ENCODE measurements at regions of chr1 and their contacts with region 1.

Region 1: GRCh38 chr1:46603858-46604549 is at the start of gene MKNK1:
- DNase-seq: peak; percentile 94 to 99 (median 99)
- ATAC-seq: peak; percentile 98
- H3K4me3 ChIP-seq: peak within 1 kb of the TSS; percentile 91 to 98
- H3K4me3 Mint-ChIP-seq: peak within 1 kb of the TSS; percentile 92
- H3K27ac ChIP-seq: peak within 1 kb of the TSS; percentile 73 to 79
- H3K27ac Mint-ChIP-seq: peak within 1 kb of the TSS; percentile 92
- H3K4me1 ChIP-seq: peaks cover 43% of the 10 kb centered on the region
- H3K4me1 Mint-ChIP-seq: peaks cover 65% of the 10 kb centered on the region
- H3K27me3 ChIP-seq: no peaks in the 10 kb centered on the region
- H3K27me3 Mint-ChIP-seq: no peaks in the 10 kb centered on the region
- CTCF ChIP-seq: no peak
- total RNA-seq, gene MKNK1: 30.3 to 30.6 TPM

Region 2: GRCh38 chr1:46197964-46198811 is 405.8 kb before region 1 on chr1 and contains the start of gene POMGNT1:
- CTCF ChIA-PET with region 1: no interaction called
- POLR2A ChIA-PET with region 1: no interaction called
- intact Hi-C with region 1: loop called in 1 of 2 experiments (anchors 5 kb)
- DNase-seq: peak; percentile 50 to 86 (median 72)
- ATAC-seq: peak; percentile 93
- H3K4me3 ChIP-seq: peak within 1 kb of the TSS; percentile 75 to 93
- H3K4me3 Mint-ChIP-seq: peak within 1 kb of the TSS; percentile 83
- H3K27ac ChIP-seq: peak within 1 kb of the TSS; percentile 58 to 59
- H3K27ac Mint-ChIP-seq: peak within 1 kb of the TSS; percentile 88
- H3K4me1 ChIP-seq: peaks cover 20% of the 10 kb centered on the region
- H3K4me1 Mint-ChIP-seq: peaks cover 32% of the 10 kb centered on the region
- H3K27me3 ChIP-seq: peaks cover 0 to 3% of the 10 kb centered on the region in 2 experiments
- H3K27me3 Mint-ChIP-seq: no peaks in the 10 kb centered on the region
- CTCF ChIP-seq: no peak
- total RNA-seq, gene POMGNT1: 20.3 to 23.4 TPM

Region 3: GRCh38 chr1:46539972-46540371 is 64.0 kb before region 1 on chr1:
- CTCF ChIA-PET with region 1: no interaction called
- POLR2A ChIA-PET with region 1: no interaction called
- intact Hi-C with region 1: no loop called
- DNase-seq: no peak
- ATAC-seq: no peak
- H3K4me3 ChIP-seq: no peak overlapping the region
- H3K4me3 Mint-ChIP-seq: no peak overlapping the region
- H3K27ac ChIP-seq: no peak overlapping the region
- H3K27ac Mint-ChIP-seq: no peak overlapping the region
- H3K4me1 ChIP-seq: no peaks in the 10 kb centered on the region
- H3K4me1 Mint-ChIP-seq: peaks cover 3% of the 10 kb centered on the region
- H3K27me3 ChIP-seq: peaks cover 6 to 8% of the 10 kb centered on the region in 2 experiments
- H3K27me3 Mint-ChIP-seq: peaks cover 35% of the 10 kb centered on the region
- CTCF ChIP-seq: no peak

Region 4: GRCh38 chr1:46616277-46617107 is 12.5 kb after region 1 on chr1 and contains the start of gene MOB3C:
- CTCF ChIA-PET with region 1: interaction called, 22 read pairs
- POLR2A ChIA-PET with region 1: interaction called, 102 read pairs
- intact Hi-C with region 1: loop called (anchors 1 kb)
- DNase-seq: peak in 8 of 9 experiments; percentile 49 to 82 (median 73)
- ATAC-seq: peak; percentile 83
- H3K4me3 ChIP-seq: peak within 1 kb of the TSS; percentile 91 to 96
- H3K4me3 Mint-ChIP-seq: peak within 1 kb of the TSS; percentile 90
- H3K27ac ChIP-seq: peak within 1 kb of the TSS; percentile 88 to 89
- H3K27ac Mint-ChIP-seq: peak within 1 kb of the TSS; percentile 92
- H3K4me1 ChIP-seq: peaks cover 47% of the 10 kb centered on the region
- H3K4me1 Mint-ChIP-seq: peaks cover 51% of the 10 kb centered on the region
- H3K27me3 ChIP-seq: no peaks in the 10 kb centered on the region
- H3K27me3 Mint-ChIP-seq: no peaks in the 10 kb centered on the region
- CTCF ChIP-seq: no peak
- total RNA-seq, gene MOB3C: 8.0 to 8.6 TPM

Region 5: GRCh38 chr1:46667782-46668760 is 64.1 kb after region 1 on chr1 and contains the start of gene ATPAF1:
- CTCF ChIA-PET with region 1: interaction called, 3 read pairs
- POLR2A ChIA-PET with region 1: interaction called, 12 read pairs
- intact Hi-C with region 1: loop called (anchors 1 to 2 kb)
- DNase-seq: peak; percentile 15 to 79 (median 49)
- ATAC-seq: peak; percentile 91
- H3K4me3 ChIP-seq: peak within 1 kb of the TSS; percentile 52 to 77
- H3K4me3 Mint-ChIP-seq: no peak within 1 kb of the TSS
- H3K27ac ChIP-seq: peak within 1 kb of the TSS; percentile 49 to 66
- H3K27ac Mint-ChIP-seq: peak within 1 kb of the TSS; percentile 69
- H3K4me1 ChIP-seq: peaks cover 22% of the 10 kb centered on the region
- H3K4me1 Mint-ChIP-seq: peaks cover 29% of the 10 kb centered on the region
- H3K27me3 ChIP-seq: no peaks in the 10 kb centered on the region
- H3K27me3 Mint-ChIP-seq: no peaks in the 10 kb centered on the region
- CTCF ChIP-seq: no peak
- total RNA-seq, gene ATPAF1: 8.3 to 10.5 TPM

Region 6: GRCh38 chr1:47313915-47314664 is 710.1 kb after region 1 on chr1 and contains the start of gene STIL:
- CTCF ChIA-PET with region 1: no interaction called
- POLR2A ChIA-PET with region 1: no interaction called
- intact Hi-C with region 1: loop called in 1 of 2 experiments (anchors 5 kb)
- DNase-seq: peak; percentile 91 to 99 (median 96)
- ATAC-seq: peak; percentile 96
- H3K4me3 ChIP-seq: peak within 1 kb of the TSS; percentile 54 to 81
- H3K4me3 Mint-ChIP-seq: peak within 1 kb of the TSS; percentile 95
- H3K27ac ChIP-seq: peak within 1 kb of the TSS; percentile 56 to 83
- H3K27ac Mint-ChIP-seq: peak within 1 kb of the TSS; percentile 95
- H3K4me1 ChIP-seq: peaks cover 3% of the 10 kb centered on the region
- H3K4me1 Mint-ChIP-seq: peaks cover 13% of the 10 kb centered on the region
- H3K27me3 ChIP-seq: no peaks in the 10 kb centered on the region
- H3K27me3 Mint-ChIP-seq: no peaks in the 10 kb centered on the region
- CTCF ChIP-seq: no peak
- total RNA-seq, gene STIL: 1.4 to 1.8 TPM

Measured in CD8-positive, alpha-beta T cell (primary cell).